ENCODE measurements at regions of chr4 and their contacts with region 1.

Region 1: DNA sequence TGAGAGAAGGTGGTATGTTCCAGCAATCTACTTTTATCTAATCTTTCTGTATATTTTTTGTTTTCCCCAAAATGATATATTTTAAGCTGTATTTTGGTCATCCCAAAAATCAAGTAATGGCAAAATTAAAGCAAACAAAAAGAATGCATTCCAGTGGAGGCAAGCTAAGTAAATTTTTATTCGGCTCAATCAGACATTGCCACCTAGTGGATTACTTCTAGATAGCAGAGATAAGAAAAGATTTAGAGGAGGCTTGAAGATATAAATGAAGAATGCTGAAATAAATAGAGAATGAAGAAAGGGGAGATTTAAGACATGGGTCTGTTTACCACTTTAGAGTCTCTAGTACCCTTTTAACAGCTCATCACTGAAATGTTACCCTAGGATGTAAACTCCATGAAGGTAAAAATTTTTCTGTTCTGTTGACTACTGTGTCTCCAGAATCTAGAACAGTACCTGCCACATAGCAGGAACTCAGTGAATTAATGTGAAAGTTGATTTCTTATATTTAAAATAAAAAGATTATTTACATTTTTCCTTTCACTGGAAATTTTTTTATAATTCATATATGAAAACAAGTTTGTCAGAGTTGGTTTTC is 110.9 kb upstream of the ANK2 start:
- DNase-seq: no peak
- ATAC-seq: peak; percentile 36 to 53
- H3K4me3 ChIP-seq: no peak overlapping the region
- H3K27ac ChIP-seq: no peak overlapping the region
- H3K4me1 ChIP-seq: no peaks in the 10 kb centered on the region
- H3K27me3 ChIP-seq: no peaks in the 10 kb centered on the region
- CTCF ChIP-seq: peak; percentile 37 to 72 (median 64)
- POLR2A ChIP-seq: no peak

Region 2: DNA sequence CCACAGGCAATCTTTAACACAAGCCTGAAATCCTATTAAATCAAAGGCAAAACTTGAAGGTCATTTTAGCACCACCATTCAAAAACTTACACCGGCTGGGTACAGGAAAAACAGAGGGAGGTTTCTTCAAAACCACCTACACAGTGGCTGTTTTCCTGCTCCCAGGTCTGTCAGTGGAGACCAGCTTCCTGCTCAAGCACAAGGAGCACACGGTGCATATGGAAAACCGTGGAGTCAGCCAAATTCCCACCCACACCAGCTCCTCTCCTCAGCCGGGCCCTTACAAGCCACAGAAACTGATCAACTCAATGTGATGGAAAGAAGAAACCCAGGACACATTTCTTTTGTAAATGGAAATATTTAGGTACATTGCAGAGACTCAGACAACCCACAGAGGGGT is 807.7 kb before region 1 on chr4:
- in situ Hi-C with region 1: no loop called
- intact Hi-C with region 1: no loop called
- DNase-seq: no peak
- ATAC-seq: no peak
- H3K4me3 ChIP-seq: no peak overlapping the region
- H3K27ac ChIP-seq: no peak overlapping the region
- H3K4me1 ChIP-seq: no peaks in the 10 kb centered on the region
- H3K27me3 ChIP-seq: no peaks in the 10 kb centered on the region
- CTCF ChIP-seq: no peak
- POLR2A ChIP-seq: no peak

Region 3: DNA sequence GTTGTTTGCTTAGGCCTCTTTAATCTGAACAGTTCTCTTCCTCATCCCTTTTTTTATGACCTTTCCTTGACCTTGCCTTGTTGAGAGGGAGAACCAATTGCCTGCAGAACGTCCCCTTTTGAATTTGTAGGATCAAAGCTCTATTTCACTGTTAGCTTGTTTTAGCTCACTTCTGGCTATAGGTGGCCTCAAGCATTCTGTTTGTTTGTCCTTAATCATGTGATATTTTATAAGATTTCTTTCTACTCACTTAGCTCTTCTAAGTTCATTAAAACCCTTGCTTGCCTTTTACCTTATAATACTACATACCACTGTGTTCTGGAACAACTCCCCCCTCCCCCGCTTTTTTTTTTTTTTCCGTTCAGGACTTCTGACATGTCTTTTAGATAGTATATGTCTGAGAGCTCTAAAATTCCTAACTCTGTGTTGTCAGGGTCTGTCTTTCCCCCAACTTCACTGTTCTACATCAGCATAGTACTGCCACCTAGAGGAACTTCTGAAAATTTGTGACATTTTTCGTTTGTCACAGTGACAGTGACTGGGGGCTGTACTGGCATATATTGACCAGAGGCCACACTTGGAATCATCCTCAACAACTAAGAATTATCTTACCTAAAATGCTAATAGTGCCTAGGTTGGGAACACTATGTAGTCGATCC is 173.1 kb before region 1 on chr4:
- in situ Hi-C with region 1: loop called in 2 of 4 experiments (anchors 10 kb)
- intact Hi-C with region 1: loop called (anchors 2 kb)
- DNase-seq: no peak
- ATAC-seq: peak; percentile 45 to 75
- H3K4me3 ChIP-seq: no peak overlapping the region
- H3K27ac ChIP-seq: no peak overlapping the region
- H3K4me1 ChIP-seq: no peaks in the 10 kb centered on the region
- H3K27me3 ChIP-seq: no peaks in the 10 kb centered on the region
- CTCF ChIP-seq: peak in 4 of 5 experiments; percentile 13 to 59 (median 46)
- POLR2A ChIP-seq: no peak

Region 4: DNA sequence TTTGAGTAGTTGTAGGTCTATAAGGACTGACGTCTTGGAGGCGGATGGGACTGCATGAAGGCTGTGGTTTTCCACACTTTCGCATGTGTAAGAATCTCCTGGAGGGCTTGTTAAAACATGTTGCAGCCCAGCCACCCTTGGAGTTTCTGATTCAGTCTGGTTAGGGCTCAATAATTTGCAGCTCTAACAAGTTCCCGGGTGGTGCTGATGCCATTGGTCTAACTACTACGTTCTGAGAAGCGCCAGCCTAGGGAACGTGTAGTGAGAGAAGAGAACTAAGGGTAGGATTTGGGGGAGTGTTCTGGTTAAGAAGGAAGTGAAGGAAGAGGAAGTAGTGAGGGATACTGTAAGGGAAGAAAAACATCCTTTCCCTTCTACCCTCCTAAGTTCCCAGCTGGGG is 162.8 kb before region 1 on chr4:
- in situ Hi-C with region 1: loop called in 1 of 4 experiments (anchors 10 kb)
- intact Hi-C with region 1: no loop called
- DNase-seq: no peak
- ATAC-seq: no peak
- H3K4me3 ChIP-seq: no peak overlapping the region
- H3K27ac ChIP-seq: no peak overlapping the region
- H3K4me1 ChIP-seq: no peaks in the 10 kb centered on the region
- H3K27me3 ChIP-seq: no peaks in the 10 kb centered on the region
- CTCF ChIP-seq: no peak
- POLR2A ChIP-seq: no peak

Region 5: DNA sequence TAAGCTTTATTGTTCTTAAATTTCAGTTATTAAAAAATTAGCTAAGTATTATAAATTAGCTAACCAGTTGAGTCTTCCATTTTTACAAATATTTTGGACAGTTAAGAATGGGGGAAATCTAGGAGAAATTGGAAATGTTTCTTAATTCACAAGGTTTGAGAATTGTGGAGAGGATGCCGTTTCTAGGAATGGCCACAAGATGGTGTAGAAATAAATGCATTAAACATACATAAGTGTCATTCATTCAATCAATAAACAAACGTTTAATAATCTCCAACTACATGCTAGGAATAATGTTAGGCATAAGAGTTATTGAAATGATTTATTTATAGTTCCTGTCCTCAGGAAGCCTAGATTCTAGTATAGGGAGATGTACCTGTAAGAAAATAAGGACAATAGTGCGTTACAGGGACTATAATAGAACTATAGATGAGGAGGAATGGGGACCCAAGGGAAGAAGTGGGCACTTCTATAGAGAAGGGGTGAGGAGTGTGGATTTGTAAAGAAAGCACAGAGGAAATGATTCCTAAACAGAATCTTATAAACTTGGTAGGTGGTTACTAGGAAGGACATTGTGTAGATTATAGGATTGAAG is 84.8 kb before region 1 on chr4:
- in situ Hi-C with region 1: loop called in 1 of 4 experiments (anchors 10 kb)
- intact Hi-C with region 1: loop called (anchors 5 kb)
- DNase-seq: no peak
- ATAC-seq: no peak
- H3K4me3 ChIP-seq: no peak overlapping the region
- H3K27ac ChIP-seq: no peak overlapping the region
- H3K4me1 ChIP-seq: peaks cover 4 to 15% of the 10 kb centered on the region in 2 donors
- H3K27me3 ChIP-seq: no peaks in the 10 kb centered on the region
- CTCF ChIP-seq: peak in 3 of 5 experiments; percentile 12 to 42 (median 14)
- POLR2A ChIP-seq: no peak

Region 6: DNA sequence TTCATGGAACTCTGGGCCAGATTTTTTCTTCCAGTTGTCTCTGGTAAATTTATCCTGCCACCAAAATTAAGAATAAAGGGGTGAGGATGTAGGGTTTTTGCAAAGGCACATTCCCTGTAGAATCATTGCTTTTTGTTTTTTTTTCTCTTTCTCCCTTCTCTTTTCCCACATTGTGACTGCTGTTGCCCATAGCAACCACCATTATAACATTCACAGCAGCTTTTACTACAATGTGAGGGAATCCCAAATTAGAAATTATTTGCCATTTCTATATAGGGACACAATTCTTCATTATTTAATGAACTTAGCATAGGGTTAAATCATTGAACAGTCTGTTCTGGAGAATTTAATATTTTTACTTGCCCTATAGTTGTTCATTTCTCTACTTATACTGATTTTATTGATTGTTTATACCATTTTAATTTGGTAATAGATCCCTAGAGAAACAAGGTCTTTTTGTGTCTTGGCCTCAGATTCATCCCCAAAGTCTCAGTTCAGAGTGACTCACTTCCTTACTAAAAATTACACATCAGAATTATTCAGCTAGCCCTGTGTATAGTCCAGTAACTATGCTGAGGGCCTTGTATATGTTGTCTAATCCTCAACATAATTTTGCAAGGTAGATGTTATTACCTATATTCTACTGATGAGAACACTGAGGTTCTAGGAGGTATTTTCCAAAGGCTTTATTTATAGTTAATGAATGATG is 30.0 kb after region 1 on chr4:
- in situ Hi-C with region 1: no loop called
- intact Hi-C with region 1: no loop called
- DNase-seq: no peak
- ATAC-seq: no peak
- H3K4me3 ChIP-seq: no peak overlapping the region
- H3K27ac ChIP-seq: no peak overlapping the region
- H3K4me1 ChIP-seq: no peaks in the 10 kb centered on the region
- H3K27me3 ChIP-seq: no peaks in the 10 kb centered on the region
- CTCF ChIP-seq: no peak
- POLR2A ChIP-seq: no peak